ENCODE measurements at regions of chr12 and their contacts with region 1.

Region 1: GRCh38 chr12:53561590-53561953 is 54.3 kb upstream of the NPFF start:
- DNase-seq: peak; percentile 85
- ATAC-seq: peak; percentile 97
- H3K4me3 ChIP-seq: peak overlapping the region in 1 of 2 experiments; percentile 6; a peak in 1 of 4 replicates
- H3K27ac ChIP-seq: peak overlapping the region; percentile 55
- H3K4me1 ChIP-seq: peaks cover 30% of the 10 kb centered on the region
- H3K27me3 ChIP-seq: no peaks in the 10 kb centered on the region
- CTCF ChIP-seq: no peak

Region 2: DNA sequence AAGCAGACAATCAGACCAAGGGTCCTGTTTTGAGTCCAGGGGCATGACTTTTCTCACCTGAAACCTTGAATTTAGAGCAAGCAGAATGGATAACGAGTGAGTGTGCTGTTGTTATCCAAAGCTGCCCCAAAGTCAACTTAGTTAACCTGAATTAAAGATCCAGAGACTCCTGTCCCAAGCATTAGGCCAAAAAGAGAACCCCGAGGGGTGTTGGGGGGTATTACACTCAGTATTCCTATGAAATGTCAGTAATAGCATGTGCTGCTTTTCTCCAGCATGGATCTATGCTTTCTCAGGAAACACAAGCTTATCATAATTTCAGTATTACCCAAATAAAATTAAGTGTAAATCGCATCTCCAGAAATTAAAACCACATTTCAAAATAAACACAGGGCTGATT is 536.3 kb before region 1 on chr12:
- CTCF ChIA-PET with region 1: no interaction called
- POLR2A ChIA-PET with region 1: no interaction called
- in situ Hi-C with region 1: no loop called
- intact Hi-C with region 1: no loop called
- DNase-seq: no peak
- ATAC-seq: no peak
- H3K4me3 ChIP-seq: no peak overlapping the region
- H3K27ac ChIP-seq: no peak overlapping the region
- H3K4me1 ChIP-seq: no peaks in the 10 kb centered on the region
- H3K27me3 ChIP-seq: no peaks in the 10 kb centered on the region
- CTCF ChIP-seq: no peak

Region 3: DNA sequence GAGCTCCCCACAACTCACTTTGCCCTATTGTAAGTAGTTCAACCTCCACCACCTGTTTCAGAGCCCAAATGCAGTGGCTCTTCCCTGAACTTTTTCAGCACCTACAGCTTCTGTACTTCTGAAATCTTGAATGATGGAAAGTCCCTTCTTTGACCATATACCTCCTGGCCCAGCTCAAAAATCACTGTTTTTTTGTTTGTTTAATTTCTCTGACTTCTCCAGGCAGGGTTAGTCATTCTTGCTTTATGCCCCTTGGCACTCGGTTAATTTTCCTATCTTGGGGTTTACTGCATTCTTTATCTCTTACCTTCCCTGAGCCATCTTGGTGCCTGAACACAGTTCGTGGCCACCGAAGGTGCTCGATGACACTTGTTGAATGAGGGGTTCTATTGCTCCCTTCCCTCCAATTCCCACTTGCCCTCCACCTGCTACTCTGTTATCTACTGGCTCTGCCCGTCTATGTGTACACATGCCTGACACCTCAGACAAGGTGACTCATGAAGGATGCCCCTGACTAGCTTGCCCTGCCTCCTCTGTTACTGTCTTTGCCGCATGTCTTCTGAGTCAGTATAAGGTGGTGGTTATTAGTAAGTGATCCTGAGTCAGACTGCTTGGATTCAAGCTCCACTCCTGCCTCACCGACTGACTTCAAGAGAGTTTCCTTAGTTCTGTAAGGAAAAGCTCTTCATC is 133.5 kb before region 1 on chr12:
- CTCF ChIA-PET with region 1: no interaction called
- POLR2A ChIA-PET with region 1: no interaction called
- in situ Hi-C with region 1: no loop called
- intact Hi-C with region 1: no loop called
- DNase-seq: peak; percentile 96
- ATAC-seq: peak; percentile 88
- H3K4me3 ChIP-seq: no peak overlapping the region
- H3K27ac ChIP-seq: no peak overlapping the region
- H3K4me1 ChIP-seq: peaks cover 6% of the 10 kb centered on the region; the same call in 1 of the 2 replicates
- H3K27me3 ChIP-seq: no peaks in the 10 kb centered on the region
- CTCF ChIP-seq: no peak

Region 4: GRCh38 chr12:53465679-53466078 is 95.9 kb before region 1 on chr12:
- CTCF ChIA-PET with region 1: no interaction called
- POLR2A ChIA-PET with region 1: no interaction called
- in situ Hi-C with region 1: no loop called
- intact Hi-C with region 1: no loop called
- DNase-seq: no peak
- ATAC-seq: no peak
- H3K4me3 ChIP-seq: no peak overlapping the region
- H3K27ac ChIP-seq: no peak overlapping the region
- H3K4me1 ChIP-seq: peaks cover 6% of the 10 kb centered on the region
- H3K27me3 ChIP-seq: no peaks in the 10 kb centered on the region
- CTCF ChIP-seq: no peak

Region 5: DNA sequence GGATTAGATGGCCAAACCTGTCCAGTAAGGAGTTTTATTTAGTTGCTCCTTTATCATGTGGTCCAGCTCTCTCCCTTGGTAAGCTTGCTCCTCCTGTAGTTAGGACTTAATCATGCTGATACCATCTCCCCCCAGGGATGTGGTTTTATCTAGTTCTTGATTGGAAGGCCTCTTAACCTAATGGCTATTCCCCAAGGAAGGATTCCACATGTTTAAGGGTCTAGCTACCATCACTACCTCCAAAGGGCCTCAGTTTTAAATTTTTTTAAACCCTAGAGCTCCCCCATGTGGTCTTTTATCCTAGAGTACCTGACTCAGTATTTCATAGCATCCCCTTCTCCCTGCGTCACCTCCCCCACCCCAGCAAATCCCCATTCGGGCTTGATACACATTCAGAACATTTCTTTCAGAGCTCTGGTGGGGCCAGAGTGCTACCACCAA is 84.8 kb before region 1 on chr12:
- CTCF ChIA-PET with region 1: no interaction called
- POLR2A ChIA-PET with region 1: no interaction called
- in situ Hi-C with region 1: no loop called
- intact Hi-C with region 1: no loop called
- DNase-seq: no peak
- ATAC-seq: peak; percentile 59
- H3K4me3 ChIP-seq: no peak overlapping the region
- H3K27ac ChIP-seq: no peak overlapping the region
- H3K4me1 ChIP-seq: peaks cover 21% of the 10 kb centered on the region
- H3K27me3 ChIP-seq: no peaks in the 10 kb centered on the region
- CTCF ChIP-seq: peak; percentile 70

Region 6: GRCh38 chr12:53579545-53579955 is 18.0 kb after region 1 on chr12:
- CTCF ChIA-PET with region 1: no interaction called
- POLR2A ChIA-PET with region 1: interaction called, 3 read pairs
- in situ Hi-C with region 1: no loop called
- intact Hi-C with region 1: loop called (anchors 1 kb)
- DNase-seq: no peak
- ATAC-seq: no peak
- H3K4me3 ChIP-seq: no peak overlapping the region
- H3K27ac ChIP-seq: no peak overlapping the region
- H3K4me1 ChIP-seq: no peaks in the 10 kb centered on the region
- H3K27me3 ChIP-seq: no peaks in the 10 kb centered on the region
- CTCF ChIP-seq: no peak